ENCODE measurements at regions of chr2 and their contacts with region 1.

Region 1: DNA sequence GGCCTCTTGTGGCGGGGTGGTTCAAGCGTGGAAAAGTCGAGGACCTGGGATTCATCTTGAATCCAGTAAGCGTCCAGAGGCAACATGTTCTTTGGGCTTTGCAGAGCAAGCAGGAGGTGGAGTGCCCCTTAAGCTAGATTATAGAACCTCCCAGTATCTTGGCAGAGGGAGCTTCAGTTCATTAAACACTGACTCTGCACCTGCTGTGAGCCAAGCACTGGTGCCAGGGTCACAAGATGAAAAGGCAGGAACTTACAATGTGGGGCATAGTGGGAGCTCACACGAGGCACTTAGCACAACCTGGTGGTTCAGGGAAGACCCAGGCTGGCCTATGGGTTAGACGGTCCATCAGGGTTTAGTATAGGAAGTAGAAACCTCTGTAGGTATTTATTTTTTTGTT is 7.4 kb upstream of the FZD5 start:
- DNase-seq: no peak
- ATAC-seq: no peak
- H3K4me3 ChIP-seq: no peak overlapping the region
- H3K27ac ChIP-seq: no peak overlapping the region
- H3K4me1 ChIP-seq: no peaks in the 10 kb centered on the region
- H3K27me3 ChIP-seq: no peaks in the 10 kb centered on the region

Region 2: GRCh38 chr2:207819839-207820784 is 43.0 kb after region 1 on chr2:
- intact Hi-C with region 1: loop called in 1 of 2 experiments (anchors 5 kb)
- DNase-seq: no peak
- ATAC-seq: no peak
- H3K4me3 ChIP-seq: no peak overlapping the region
- H3K27ac ChIP-seq: no peak overlapping the region
- H3K4me1 ChIP-seq: peaks cover 3% of the 10 kb centered on the region in 2 donors
- H3K27me3 ChIP-seq: no peaks in the 10 kb centered on the region

Region 3: GRCh38 chr2:208112969-208113368 is 335.8 kb after region 1 on chr2:
- intact Hi-C with region 1: no loop called
- DNase-seq: no peak
- ATAC-seq: no peak
- H3K4me3 ChIP-seq: no peak overlapping the region
- H3K27ac ChIP-seq: no peak overlapping the region
- H3K4me1 ChIP-seq: no peaks in the 10 kb centered on the region
- H3K27me3 ChIP-seq: no peaks in the 10 kb centered on the region

Measured in aorta (tissue), 5 donors.